Activated CD8-positive, alpha-beta T cell treated with anti-CD3 and anti-CD28 coated beads for 36 hours (primary cell): ENCODE measurements at regions of chr7 and their contacts with region 1.

Region 1: GRCh38 chr7:23570592-23571200 is 26.5 kb upstream of the CCDC126 start:
- DNase-seq: peak; percentile 82
- ATAC-seq: peak; percentile 87
- H3K4me3 Mint-ChIP-seq: no peak overlapping the region
- H3K27ac Mint-ChIP-seq: no peak overlapping the region
- H3K4me1 Mint-ChIP-seq: no peaks in the 10 kb centered on the region
- H3K27me3 Mint-ChIP-seq: peaks cover 16% of the 10 kb centered on the region
- CTCF ChIP-seq: peak; percentile 80

Region 2: GRCh38 chr7:23586159-23586558 is 15.5 kb after region 1 on chr7:
- CTCF ChIA-PET with region 1: interaction called, 12 read pairs
- POLR2A ChIA-PET with region 1: interaction called, 3 read pairs
- intact Hi-C with region 1: no loop called
- DNase-seq: no peak
- ATAC-seq: no peak
- H3K4me3 Mint-ChIP-seq: no peak overlapping the region
- H3K27ac Mint-ChIP-seq: no peak overlapping the region
- H3K4me1 Mint-ChIP-seq: no peaks in the 10 kb centered on the region
- H3K27me3 Mint-ChIP-seq: no peaks in the 10 kb centered on the region
- CTCF ChIP-seq: no peak

Region 3: GRCh38 chr7:23685731-23686130 is 115.0 kb after region 1 on chr7:
- CTCF ChIA-PET with region 1: interaction called, 10 read pairs
- POLR2A ChIA-PET with region 1: interaction called, 3 read pairs
- intact Hi-C with region 1: no loop called
- DNase-seq: no peak
- ATAC-seq: no peak
- H3K4me3 Mint-ChIP-seq: no peak overlapping the region
- H3K27ac Mint-ChIP-seq: no peak overlapping the region
- H3K4me1 Mint-ChIP-seq: peaks cover 5% of the 10 kb centered on the region
- H3K27me3 Mint-ChIP-seq: no peaks in the 10 kb centered on the region
- CTCF ChIP-seq: no peak

Region 4: GRCh38 chr7:23691320-23691719 is 120.6 kb after region 1 on chr7:
- CTCF ChIA-PET with region 1: interaction called, 37 read pairs
- POLR2A ChIA-PET with region 1: no interaction called
- intact Hi-C with region 1: no loop called
- DNase-seq: no peak
- ATAC-seq: no peak
- H3K4me3 Mint-ChIP-seq: no peak overlapping the region
- H3K27ac Mint-ChIP-seq: no peak overlapping the region
- H3K4me1 Mint-ChIP-seq: no peaks in the 10 kb centered on the region
- H3K27me3 Mint-ChIP-seq: no peaks in the 10 kb centered on the region
- CTCF ChIP-seq: no peak

Region 5: DNA sequence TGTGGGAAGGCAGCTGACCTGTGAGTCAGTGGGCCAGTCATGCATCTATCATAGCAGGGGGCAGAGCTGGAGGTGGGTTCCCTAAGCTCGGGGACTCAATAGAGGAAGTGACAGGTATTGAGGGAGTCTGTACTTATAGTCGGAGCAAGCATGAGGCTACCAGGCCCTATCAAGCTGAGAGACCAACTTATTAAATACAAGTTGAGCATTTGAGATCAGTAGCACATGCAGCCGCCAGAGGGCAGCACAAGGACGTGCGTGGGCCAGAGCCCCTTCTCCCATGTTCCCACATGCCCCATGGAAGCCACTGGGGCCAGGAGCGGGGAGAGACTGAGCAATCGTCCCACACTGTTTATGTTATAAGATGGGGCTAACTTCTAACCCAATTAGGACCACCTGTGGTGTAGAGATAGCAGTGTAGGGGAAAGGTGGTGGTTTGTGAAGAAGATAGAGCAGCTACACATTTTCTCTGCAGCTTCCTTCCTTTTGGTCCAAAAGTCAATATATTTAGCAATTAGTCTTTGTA is 126.3 kb after region 1 on chr7:
- CTCF ChIA-PET with region 1: interaction called, 37 read pairs
- POLR2A ChIA-PET with region 1: no interaction called
- intact Hi-C with region 1: no loop called
- DNase-seq: peak; percentile 76
- ATAC-seq: peak; percentile 45
- H3K4me3 Mint-ChIP-seq: no peak overlapping the region
- H3K27ac Mint-ChIP-seq: no peak overlapping the region
- H3K4me1 Mint-ChIP-seq: no peaks in the 10 kb centered on the region
- H3K27me3 Mint-ChIP-seq: no peaks in the 10 kb centered on the region
- CTCF ChIP-seq: peak; percentile 63

Region 6: GRCh38 chr7:23712368-23713284 is 141.9 kb after region 1 on chr7:
- CTCF ChIA-PET with region 1: interaction called, 51 read pairs
- POLR2A ChIA-PET with region 1: no interaction called
- intact Hi-C with region 1: loop called (anchors 1 kb)
- DNase-seq: no peak
- ATAC-seq: no peak
- H3K4me3 Mint-ChIP-seq: no peak overlapping the region
- H3K27ac Mint-ChIP-seq: no peak overlapping the region
- H3K4me1 Mint-ChIP-seq: no peaks in the 10 kb centered on the region
- H3K27me3 Mint-ChIP-seq: no peaks in the 10 kb centered on the region
- CTCF ChIP-seq: peak; percentile 84